ENCODE measurements at regions of chr2 and their contacts with region 1.

Region 1: GRCh38 chr2:204325468-204325867 is 219.8 kb upstream of the PARD3B start:
- DNase-seq: peak; percentile 87
- H3K4me3 ChIP-seq: no peak overlapping the region
- H3K27ac ChIP-seq: no peak overlapping the region
- H3K4me1 ChIP-seq: peaks cover 0 to 21% (median 0%) of the 10 kb centered on the region in 4 donors
- H3K27me3 ChIP-seq: no peaks in the 10 kb centered on the region
- CTCF ChIP-seq: peak; percentile 82 to 93 (median 88)
- EP300 ChIP-seq: no peak
- POLR2A ChIP-seq: no peak

Region 2: DNA sequence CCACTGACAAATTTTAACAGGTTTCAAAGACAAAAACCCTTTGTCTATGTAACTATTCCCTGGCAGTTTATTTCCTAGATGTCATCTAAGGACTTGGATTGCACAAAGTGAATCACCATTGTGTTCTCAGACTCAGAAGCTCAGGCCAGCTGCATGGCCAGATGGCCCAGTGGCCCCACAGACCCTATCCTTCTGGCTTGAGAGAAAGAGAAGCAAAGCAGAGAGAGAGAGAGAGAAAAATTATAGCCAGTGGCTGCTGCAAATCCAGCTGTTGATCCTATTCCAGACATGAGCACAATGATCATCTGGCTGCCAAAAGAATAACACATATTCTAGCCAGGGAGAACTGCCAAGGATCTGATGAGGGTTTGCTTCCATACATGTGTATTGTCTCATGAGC is 432.1 kb before region 1 on chr2:
- intact Hi-C with region 1: no loop called
- DNase-seq: peak; percentile 85
- H3K4me3 ChIP-seq: no peak overlapping the region
- H3K27ac ChIP-seq: peak overlapping the region in 3 of 4 donors; percentile 61 to 78 (median 68)
- H3K4me1 ChIP-seq: peaks cover 0 to 57% (median 39%) of the 10 kb centered on the region in 4 donors
- H3K27me3 ChIP-seq: no peaks in the 10 kb centered on the region
- CTCF ChIP-seq: no peak
- EP300 ChIP-seq: peak in 1 of 4 donors; percentile 12
- POLR2A ChIP-seq: no peak

Region 3: GRCh38 chr2:204024503-204024902 is 301.0 kb before region 1 on chr2:
- intact Hi-C with region 1: loop called (anchors 10 kb)
- DNase-seq: no peak
- H3K4me3 ChIP-seq: no peak overlapping the region
- H3K27ac ChIP-seq: peak overlapping the region in 2 of 4 donors; percentile 24 to 46
- H3K4me1 ChIP-seq: peaks cover 0 to 30% (median 18%) of the 10 kb centered on the region in 4 donors
- H3K27me3 ChIP-seq: no peaks in the 10 kb centered on the region
- CTCF ChIP-seq: peak; percentile 45 to 63 (median 58)
- EP300 ChIP-seq: no peak
- POLR2A ChIP-seq: no peak

Region 4: GRCh38 chr2:204293884-204294747 is 31.4 kb before region 1 on chr2:
- intact Hi-C with region 1: no loop called
- DNase-seq: no peak
- H3K4me3 ChIP-seq: no peak overlapping the region
- H3K27ac ChIP-seq: no peak overlapping the region
- H3K4me1 ChIP-seq: no peaks in the 10 kb centered on the region
- H3K27me3 ChIP-seq: no peaks in the 10 kb centered on the region
- CTCF ChIP-seq: no peak
- EP300 ChIP-seq: no peak
- POLR2A ChIP-seq: no peak

Region 5: GRCh38 chr2:204691911-204692510 is 366.5 kb after region 1 on chr2:
- intact Hi-C with region 1: loop called (anchors 2 kb)
- DNase-seq: peak; percentile 75
- H3K4me3 ChIP-seq: no peak overlapping the region
- H3K27ac ChIP-seq: peak overlapping the region in 2 of 4 donors; percentile 3 to 8
- H3K4me1 ChIP-seq: peaks cover 0 to 56% (median 35%) of the 10 kb centered on the region in 4 donors
- H3K27me3 ChIP-seq: no peaks in the 10 kb centered on the region
- CTCF ChIP-seq: peak; percentile 47 to 74 (median 64)
- EP300 ChIP-seq: peak in 1 of 4 donors; percentile 28
- POLR2A ChIP-seq: no peak

Region 6: GRCh38 chr2:204869132-204869823 is 543.8 kb after region 1 on chr2:
- intact Hi-C with region 1: loop called (anchors 5 kb)
- DNase-seq: no peak
- H3K4me3 ChIP-seq: no peak overlapping the region
- H3K27ac ChIP-seq: peak overlapping the region in 2 of 4 donors; percentile 12 to 30
- H3K4me1 ChIP-seq: peaks cover 0 to 55% (median 23%) of the 10 kb centered on the region in 4 donors
- H3K27me3 ChIP-seq: no peaks in the 10 kb centered on the region
- CTCF ChIP-seq: no peak
- EP300 ChIP-seq: no peak
- POLR2A ChIP-seq: no peak

Region 7: DNA sequence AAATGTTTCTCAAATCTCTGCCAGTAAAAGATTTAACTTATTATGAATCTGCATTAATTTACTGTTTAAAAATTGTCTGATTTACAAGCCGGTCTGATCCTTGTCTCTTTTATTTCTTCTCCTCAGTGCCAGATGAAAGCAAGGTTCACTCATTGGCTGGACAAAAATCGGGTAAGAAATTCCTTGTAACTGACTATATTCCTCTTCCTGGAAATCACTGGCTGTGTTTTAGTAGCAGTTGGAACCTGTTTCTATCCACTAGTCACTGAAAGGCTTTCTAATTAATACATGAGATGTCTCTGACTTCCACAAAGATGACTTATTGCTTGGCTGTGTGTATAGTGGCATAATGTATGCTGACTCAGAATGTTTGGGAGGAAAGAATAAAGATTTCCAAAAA is 920.2 kb after region 1 on chr2:
- intact Hi-C with region 1: loop called (anchors 10 kb)
- DNase-seq: no peak
- H3K4me3 ChIP-seq: no peak overlapping the region
- H3K27ac ChIP-seq: peak overlapping the region in 3 of 4 donors; percentile 18 to 72 (median 66)
- H3K4me1 ChIP-seq: peaks cover 0 to 25% (median 21%) of the 10 kb centered on the region in 4 donors
- H3K27me3 ChIP-seq: no peaks in the 10 kb centered on the region
- CTCF ChIP-seq: no peak
- EP300 ChIP-seq: peak in 2 of 4 donors; percentile 26 to 67
- POLR2A ChIP-seq: no peak